ENCODE measurements at regions of chr22 and their contacts with region 1.

Region 1: GRCh38 chr22:28600546-28601143 is 79.0 kb downstream of the TTC28 start:
- DNase-seq: no peak
- H3K4me3 ChIP-seq: no peak overlapping the region
- H3K27ac ChIP-seq: no peak overlapping the region
- H3K4me1 ChIP-seq: no peaks in the 10 kb centered on the region
- H3K27me3 ChIP-seq: no peaks in the 10 kb centered on the region
- CTCF ChIP-seq: peak; percentile 23 to 75 (median 62)
- POLR2A ChIP-seq: no peak

Region 2: GRCh38 chr22:28480000-28480715 is 120.5 kb before region 1 on chr22:
- intact Hi-C with region 1: no loop called
- DNase-seq: no peak
- H3K4me3 ChIP-seq: no peak overlapping the region
- H3K27ac ChIP-seq: no peak overlapping the region
- H3K4me1 ChIP-seq: no peaks in the 10 kb centered on the region
- H3K27me3 ChIP-seq: no peaks in the 10 kb centered on the region
- CTCF ChIP-seq: no peak
- POLR2A ChIP-seq: no peak

Region 3: DNA sequence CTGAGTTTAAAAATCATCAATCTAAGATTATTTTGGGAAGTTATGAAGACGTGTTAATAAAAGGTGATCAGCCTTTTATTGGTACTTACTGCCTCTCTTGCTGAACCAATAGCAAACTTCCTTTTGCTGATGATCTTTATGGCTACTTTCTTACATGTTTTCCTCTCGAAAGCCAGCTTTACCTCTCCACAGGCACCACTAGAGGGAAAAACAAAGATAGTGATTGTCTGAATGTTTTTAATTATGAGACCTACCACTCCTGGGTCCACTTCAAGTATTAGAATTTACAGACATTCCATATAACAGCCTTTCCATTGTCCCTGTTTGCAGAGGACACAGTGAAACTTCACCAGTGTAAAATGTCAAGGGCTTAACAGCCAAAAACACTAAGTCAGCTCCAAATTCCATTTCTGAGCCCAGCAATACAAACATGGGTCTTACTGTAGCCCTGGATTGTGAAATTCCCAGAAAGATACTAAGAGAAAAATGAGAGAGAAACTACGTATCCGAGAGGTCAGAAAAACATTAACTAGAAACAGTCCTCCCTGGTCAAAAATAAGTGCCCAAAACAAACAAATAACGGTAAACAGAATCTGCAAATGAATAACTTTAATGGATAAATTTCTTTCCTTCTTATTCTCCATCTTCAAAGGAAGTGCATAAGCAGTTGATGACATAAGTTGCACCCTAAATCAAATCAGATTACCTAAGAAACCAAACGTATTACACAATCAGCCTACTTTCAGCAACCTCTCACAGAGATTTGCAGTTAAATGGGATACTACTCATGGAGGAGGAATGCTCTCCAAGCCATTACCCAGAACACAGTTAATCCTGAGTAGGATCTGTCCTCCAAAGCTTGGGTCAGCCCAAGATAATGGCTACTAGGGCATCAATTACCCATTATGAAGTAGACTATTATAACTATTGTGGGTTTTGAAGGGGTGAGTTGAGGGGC is 111.5 kb after region 1 on chr22:
- intact Hi-C with region 1: loop called (anchors 10 kb)
- DNase-seq: no peak
- H3K4me3 ChIP-seq: no peak overlapping the region
- H3K27ac ChIP-seq: peak overlapping the region; percentile 20 to 35
- H3K4me1 ChIP-seq: no peaks in the 10 kb centered on the region
- H3K27me3 ChIP-seq: no peaks in the 10 kb centered on the region
- CTCF ChIP-seq: no peak
- POLR2A ChIP-seq: no peak

Region 4: GRCh38 chr22:28829358-28830181 is 228.9 kb after region 1 on chr22:
- intact Hi-C with region 1: loop called (anchors 2 kb)
- DNase-seq: peak; percentile 79
- H3K4me3 ChIP-seq: no peak overlapping the region
- H3K27ac ChIP-seq: peak overlapping the region in 1 of 2 donors; percentile 23
- H3K4me1 ChIP-seq: peaks cover 5% of the 10 kb centered on the region
- H3K27me3 ChIP-seq: no peaks in the 10 kb centered on the region
- CTCF ChIP-seq: peak; percentile 91 to 97 (median 96)
- POLR2A ChIP-seq: no peak

Region 5: DNA sequence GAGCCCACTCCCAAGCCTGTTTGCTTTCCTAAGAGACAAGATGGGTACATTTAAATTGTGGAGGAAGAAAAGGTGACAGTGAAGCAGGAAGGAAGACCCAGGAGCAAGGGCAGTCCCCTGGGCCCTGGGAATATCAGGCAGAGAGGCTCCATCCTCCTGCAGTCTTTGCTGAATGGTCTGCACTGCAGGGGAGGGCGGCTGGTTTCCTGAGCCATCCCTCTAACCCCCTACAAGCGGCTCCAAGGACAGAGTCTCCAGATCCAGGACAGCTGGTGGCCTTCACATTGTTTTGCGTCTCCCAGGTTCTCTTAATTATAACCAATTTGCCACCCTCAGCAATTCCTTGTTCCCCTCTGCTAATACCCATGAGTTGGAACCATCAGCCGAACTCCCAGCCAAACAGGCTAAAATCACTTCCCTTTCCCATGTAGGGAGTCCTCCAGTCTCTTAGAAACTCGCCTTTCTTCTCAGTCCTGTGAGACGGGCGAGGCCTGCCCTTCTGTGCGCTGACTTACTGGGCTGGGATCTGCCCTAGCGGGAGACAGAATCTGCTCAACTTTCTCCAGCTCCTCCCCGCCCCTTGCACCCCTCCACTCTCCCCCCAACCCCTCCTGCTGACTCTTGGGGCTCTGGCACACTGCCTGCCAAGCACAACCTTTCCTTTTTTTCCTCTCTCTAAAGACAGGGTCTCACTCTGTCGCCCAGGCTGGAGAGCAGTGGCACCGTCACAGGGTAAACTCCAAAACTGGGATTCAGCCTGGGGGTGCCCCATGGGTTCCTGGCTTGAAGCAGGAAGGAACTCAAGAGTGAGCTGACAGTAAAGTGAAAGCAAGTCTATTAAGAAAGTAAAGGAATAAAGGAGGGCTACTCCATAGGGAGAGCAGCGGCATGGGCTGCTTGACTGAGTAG is 551.7 kb after region 1 on chr22:
- intact Hi-C with region 1: no loop called
- DNase-seq: no peak
- H3K4me3 ChIP-seq: no peak overlapping the region
- H3K27ac ChIP-seq: peak overlapping the region; percentile 21 to 35
- H3K4me1 ChIP-seq: peaks cover 4% of the 10 kb centered on the region
- H3K27me3 ChIP-seq: no peaks in the 10 kb centered on the region
- CTCF ChIP-seq: no peak
- POLR2A ChIP-seq: no peak

Region 6: DNA sequence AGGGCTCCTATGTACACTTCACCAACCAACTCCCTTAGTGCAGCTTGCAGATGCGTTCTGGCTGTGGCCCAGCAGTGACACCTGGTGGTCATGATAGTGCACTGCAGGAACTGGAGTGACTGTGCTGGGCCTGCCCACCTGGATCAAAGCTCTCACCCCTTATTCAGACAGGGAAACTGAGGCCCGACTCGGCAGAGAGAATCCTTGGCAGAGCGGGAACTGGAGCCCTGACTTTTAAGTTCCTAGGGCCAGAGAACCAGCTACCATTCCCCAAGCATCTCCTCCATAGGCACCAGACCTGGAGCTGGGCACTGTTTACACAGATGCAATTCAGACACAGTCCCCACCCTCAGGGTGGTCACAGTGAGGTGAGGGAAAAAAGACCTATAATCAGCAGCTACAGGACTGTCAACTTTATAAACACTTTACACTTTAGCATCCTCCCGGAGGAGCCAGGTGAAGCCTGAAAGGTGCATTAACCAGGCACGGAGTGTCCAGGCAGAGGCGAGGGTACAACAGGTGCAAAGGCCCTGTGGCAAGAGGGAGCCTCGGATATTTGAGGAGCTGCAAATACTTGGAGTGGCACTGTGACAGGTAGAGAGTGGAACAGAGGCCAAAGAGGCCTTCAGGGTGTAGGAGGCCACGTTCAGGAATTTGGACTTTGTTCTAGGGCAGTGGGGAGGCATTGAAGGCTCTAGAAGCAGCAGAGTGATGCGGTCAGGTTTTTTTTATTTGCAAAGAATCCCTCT is 645.2 kb after region 1 on chr22:
- intact Hi-C with region 1: loop called (anchors 5 kb)
- DNase-seq: peak; percentile 60
- H3K4me3 ChIP-seq: no peak overlapping the region
- H3K27ac ChIP-seq: no peak overlapping the region
- H3K4me1 ChIP-seq: no peaks in the 10 kb centered on the region
- H3K27me3 ChIP-seq: no peaks in the 10 kb centered on the region
- CTCF ChIP-seq: peak; percentile 89 to 93 (median 92)
- POLR2A ChIP-seq: no peak

Measured in prostate gland (tissue), 2 donors.